Panc1 (cell line): ENCODE measurements at regions of chr6 and their contacts with region 1.

Region 1: GRCh38 chr6:109925079-109925478 is 53.0 kb upstream of the GPR6 start:
- DNase-seq: no peak
- ATAC-seq: no peak
- H3K4me3 ChIP-seq: no peak overlapping the region
- H3K27ac ChIP-seq: no peak overlapping the region
- H3K4me1 ChIP-seq: no peaks in the 10 kb centered on the region
- H3K27me3 ChIP-seq: peaks cover 24% of the 10 kb centered on the region
- CTCF ChIP-seq: no peak

Region 2: DNA sequence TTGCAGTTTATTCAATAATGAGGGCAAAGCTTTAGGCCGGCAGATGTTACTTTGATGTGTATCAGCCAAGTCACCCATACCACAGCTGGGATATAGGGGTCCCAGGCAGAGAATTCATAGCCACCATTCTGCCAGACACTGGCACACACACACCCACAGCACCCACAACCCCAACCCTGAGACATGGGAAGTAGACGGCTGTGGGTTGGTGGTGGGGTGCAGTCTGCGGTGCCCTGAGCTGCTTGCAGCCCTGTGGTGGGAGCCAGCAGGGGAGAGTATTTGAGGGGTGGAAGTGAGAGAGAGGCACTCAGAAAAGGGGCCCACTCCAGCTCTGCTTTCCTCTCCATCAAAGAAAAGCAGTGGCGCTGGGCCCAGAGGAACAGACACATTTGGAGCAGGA is 1239.1 kb before region 1 on chr6:
- CTCF ChIA-PET with region 1: no interaction called
- POLR2A ChIA-PET with region 1: interaction called, 16 read pairs
- in situ Hi-C with region 1: no loop called
- intact Hi-C with region 1: no loop called
- DNase-seq: no peak
- ATAC-seq: no peak
- H3K4me3 ChIP-seq: no peak overlapping the region
- H3K27ac ChIP-seq: no peak overlapping the region; the same call in 1 of the 2 replicates
- H3K4me1 ChIP-seq: peaks cover 6% of the 10 kb centered on the region; the same call in 1 of the 2 replicates
- H3K27me3 ChIP-seq: no peaks in the 10 kb centered on the region
- CTCF ChIP-seq: no peak

Region 3: DNA sequence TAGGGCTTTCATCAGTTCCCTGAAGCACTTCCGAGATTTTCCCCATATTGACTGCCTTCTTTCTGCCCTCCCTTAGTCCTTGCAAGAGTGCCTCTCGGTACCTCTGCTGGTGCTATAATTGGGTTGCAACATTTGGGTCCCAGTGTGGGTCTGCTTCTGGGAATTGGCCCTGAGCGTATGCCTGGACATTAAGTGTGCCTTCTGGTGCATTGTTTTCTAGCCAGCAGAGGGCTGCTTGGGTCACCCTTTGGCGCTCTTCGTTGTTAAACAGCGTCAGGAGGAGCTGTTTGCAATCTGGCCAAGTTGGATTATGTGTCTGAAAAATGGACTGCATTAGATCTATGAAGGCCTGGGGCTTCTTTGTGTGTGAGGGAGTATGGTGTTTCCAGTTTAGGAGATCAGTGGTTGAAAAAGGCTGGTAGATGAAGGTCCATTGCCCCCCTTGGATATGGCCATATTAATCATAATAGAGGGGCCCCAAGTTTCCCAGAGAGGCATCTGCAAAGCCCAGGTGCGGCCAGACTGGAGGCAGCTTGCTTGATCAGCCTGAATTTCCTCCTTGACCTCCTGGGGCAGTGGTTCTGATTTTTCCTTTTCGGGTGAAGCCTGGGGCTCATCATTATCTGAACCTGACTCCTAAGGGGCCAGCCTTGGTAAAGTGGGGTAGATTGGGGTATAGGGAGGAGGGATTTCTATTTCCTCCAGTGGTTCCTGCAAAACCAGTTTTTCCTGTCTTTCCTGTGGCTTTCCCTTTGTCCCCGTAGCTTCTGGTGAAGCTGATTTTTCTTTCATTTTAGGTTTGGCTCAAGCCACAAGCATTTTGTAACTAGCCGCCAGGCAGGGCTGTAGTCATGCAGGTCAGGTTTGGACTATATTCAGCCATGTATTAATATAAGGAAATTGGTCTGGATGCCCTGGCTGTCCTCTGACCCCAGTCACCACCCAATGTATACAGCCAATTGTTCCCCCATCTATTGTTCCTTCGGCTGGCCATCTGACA is 32.3 kb before region 1 on chr6:
- CTCF ChIA-PET with region 1: no interaction called
- POLR2A ChIA-PET with region 1: interaction called, 12 read pairs
- in situ Hi-C with region 1: no loop called
- intact Hi-C with region 1: no loop called
- DNase-seq: no peak
- ATAC-seq: peak; percentile 64; the same call in 1 of the 2 replicates
- H3K4me3 ChIP-seq: no peak overlapping the region
- H3K27ac ChIP-seq: no peak overlapping the region
- H3K4me1 ChIP-seq: no peaks in the 10 kb centered on the region
- H3K27me3 ChIP-seq: peaks cover 8% of the 10 kb centered on the region
- CTCF ChIP-seq: no peak; the same call in 1 of the 2 replicates

Region 4: DNA sequence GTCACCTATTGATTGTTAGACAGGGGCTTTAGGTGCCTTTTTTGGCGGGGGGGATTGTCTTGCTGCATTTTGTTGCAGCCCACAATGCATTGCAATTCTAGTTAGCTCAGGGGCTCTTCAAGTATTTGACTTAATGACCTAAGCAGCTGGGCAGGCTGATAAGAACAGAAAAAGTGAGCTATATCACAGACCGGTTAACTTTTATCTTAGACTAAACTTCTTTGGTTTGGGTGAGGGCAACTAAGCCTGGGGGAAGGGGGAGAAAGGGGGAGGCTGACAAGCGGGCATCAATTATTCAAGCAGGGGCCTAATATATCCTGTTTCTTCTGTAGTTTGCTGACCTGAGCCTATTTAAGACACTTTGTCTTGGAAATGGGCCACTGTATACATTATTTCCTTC is 13.0 kb before region 1 on chr6:
- CTCF ChIA-PET with region 1: no interaction called
- POLR2A ChIA-PET with region 1: no interaction called
- in situ Hi-C with region 1: no loop called
- intact Hi-C with region 1: no loop called
- DNase-seq: no peak
- ATAC-seq: no peak
- H3K4me3 ChIP-seq: no peak overlapping the region
- H3K27ac ChIP-seq: no peak overlapping the region
- H3K4me1 ChIP-seq: no peaks in the 10 kb centered on the region
- H3K27me3 ChIP-seq: peaks cover 14% of the 10 kb centered on the region
- CTCF ChIP-seq: no peak